Endothelial cell of umbilical vein (primary cell): ENCODE measurements at regions of chr1 and their contacts with region 1.

Region 1: DNA sequence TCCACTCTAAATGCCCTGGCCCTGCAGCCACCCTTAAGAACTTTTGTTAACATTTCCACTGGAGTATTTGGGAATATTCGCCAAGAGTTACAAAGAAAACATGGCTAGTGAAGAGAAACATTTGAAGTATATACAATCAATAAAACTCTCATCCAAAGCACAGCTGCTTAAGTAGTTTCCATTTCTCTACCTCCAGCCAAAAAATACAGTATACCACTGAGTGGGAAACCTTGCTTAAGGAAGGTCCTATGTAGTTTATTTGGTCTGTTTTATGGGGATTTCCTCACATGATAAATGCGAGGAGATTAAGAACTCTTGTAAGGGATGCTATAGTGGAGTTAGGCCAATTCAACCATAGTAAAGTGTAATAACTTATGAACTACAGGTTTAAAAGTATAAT is 382.5 kb downstream of the NEGR1 start:
- DNase-seq: no peak
- H3K4me3 ChIP-seq: no peak overlapping the region
- H3K27ac ChIP-seq: no peak overlapping the region
- H3K4me1 ChIP-seq: no peaks in the 10 kb centered on the region
- H3K27me3 ChIP-seq: no peaks in the 10 kb centered on the region
- CTCF ChIP-seq: no peak
- POLR2A ChIP-seq: no peak

Region 2: GRCh38 chr1:71967670-71968069 is 67.8 kb after region 1 on chr1:
- CTCF ChIA-PET with region 1: no interaction called
- POLR2A ChIA-PET with region 1: no interaction called
- dilution Hi-C with region 1: no loop called
- intact Hi-C with region 1: no loop called
- DNase-seq: no peak
- H3K4me3 ChIP-seq: no peak overlapping the region
- H3K27ac ChIP-seq: no peak overlapping the region
- H3K4me1 ChIP-seq: no peaks in the 10 kb centered on the region
- H3K27me3 ChIP-seq: no peaks in the 10 kb centered on the region
- CTCF ChIP-seq: no peak
- POLR2A ChIP-seq: no peak

Region 3: DNA sequence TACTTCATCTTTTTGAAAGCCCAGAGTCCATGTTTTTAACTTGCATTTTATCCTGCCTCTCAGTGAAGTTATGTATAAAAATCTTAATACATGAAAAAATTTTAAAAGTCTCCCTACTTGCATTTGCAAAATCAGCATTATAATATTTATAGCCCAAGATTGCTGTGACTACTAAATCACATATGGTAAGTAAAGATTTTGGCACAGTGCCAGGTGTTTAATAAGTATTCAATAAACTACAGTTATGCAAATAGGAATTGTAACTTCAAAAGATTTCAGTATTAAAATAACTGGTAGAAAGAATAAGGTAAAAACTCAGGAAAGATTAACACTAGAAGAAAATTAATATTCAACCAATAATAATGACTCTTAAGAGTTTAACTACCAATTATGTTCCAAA is 1656.4 kb after region 1 on chr1:
- CTCF ChIA-PET with region 1: no interaction called
- POLR2A ChIA-PET with region 1: interaction called, 10 read pairs
- dilution Hi-C with region 1: no loop called
- intact Hi-C with region 1: no loop called
- DNase-seq: no peak
- H3K4me3 ChIP-seq: no peak overlapping the region
- H3K27ac ChIP-seq: no peak overlapping the region
- H3K4me1 ChIP-seq: no peaks in the 10 kb centered on the region
- H3K27me3 ChIP-seq: no peaks in the 10 kb centered on the region
- CTCF ChIP-seq: no peak
- POLR2A ChIP-seq: no peak